Activated T-helper 1 cell treated with anti-CD3 and anti-CD28 coated beads, Interleukin-12 subunit alpha, Interleukin-12 subunit beta, Interleukin-2, Interleukin-4 antibody, amounts not matched to agents 30 ng/mL and 10 ng/mL and 1 ng/mL, durations not matched to agents 14 hours and 24 hours and 36 hours (primary cell): ENCODE measurements at regions of chr19 and their contacts with region 1.

Region 1: GRCh38 chr19:34772697-34773554 is at the start of gene ZNF599:
- DNase-seq: peak; percentile 85
- H3K4me3 Mint-ChIP-seq: peak within 1 kb of the TSS; percentile 91
- H3K27ac Mint-ChIP-seq: peak within 1 kb of the TSS; percentile 95
- H3K4me1 Mint-ChIP-seq: peaks cover 23% of the 10 kb centered on the region
- H3K27me3 Mint-ChIP-seq: no peaks in the 10 kb centered on the region
- total RNA-seq, gene ZNF599: 2.3 and 2.6 TPM in 2 replicates

Region 2: GRCh38 chr19:34733826-34734600 is 38.9 kb before region 1 on chr19 and contains the start of gene ZNF181:
- intact Hi-C with region 1: loop called (anchors 1 kb)
- DNase-seq: peak; percentile 72
- H3K4me3 Mint-ChIP-seq: peak within 1 kb of the TSS; percentile 92
- H3K27ac Mint-ChIP-seq: peak within 1 kb of the TSS; percentile 95
- H3K4me1 Mint-ChIP-seq: peaks cover 24% of the 10 kb centered on the region
- H3K27me3 Mint-ChIP-seq: no peaks in the 10 kb centered on the region
- total RNA-seq, gene ZNF181: 3.1 and 4.3 TPM in 2 replicates

Region 3: GRCh38 chr19:34963573-34964409 is 190.9 kb after region 1 on chr19 and contains the start of gene ZNF792:
- intact Hi-C with region 1: loop called (anchors 5 kb)
- DNase-seq: peak; percentile 37
- H3K4me3 Mint-ChIP-seq: peak within 1 kb of the TSS; percentile 91
- H3K27ac Mint-ChIP-seq: peak within 1 kb of the TSS; percentile 83
- H3K4me1 Mint-ChIP-seq: peaks cover 22% of the 10 kb centered on the region
- H3K27me3 Mint-ChIP-seq: peaks cover 3% of the 10 kb centered on the region
- total RNA-seq, gene ZNF792: 6.5 and 6.8 TPM in 2 replicates